ENCODE measurements at regions of chr10 and their contacts with region 1.

Region 1: DNA sequence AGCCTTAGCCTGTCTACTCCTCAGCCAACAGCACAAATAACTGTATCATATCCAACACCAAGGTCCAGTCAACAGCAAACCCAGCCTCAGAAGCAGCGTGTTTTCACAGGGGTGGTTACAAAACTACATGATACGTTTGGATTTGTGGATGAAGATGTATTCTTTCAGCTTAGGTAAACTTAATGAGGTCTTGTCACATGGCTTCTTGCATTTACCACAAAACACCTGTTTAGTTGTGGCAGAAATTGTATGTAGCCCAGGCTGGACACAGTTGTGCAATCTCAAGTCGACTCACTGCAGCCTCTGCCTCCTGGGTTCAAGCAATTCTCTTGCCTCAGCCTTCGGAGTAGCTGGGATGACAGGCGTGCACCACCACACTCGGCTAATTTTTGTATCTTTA is 21.4 kb downstream of the CCAR1 start:
- DNase-seq: no peak
- H3K4me3 ChIP-seq: no peak overlapping the region
- H3K27ac ChIP-seq: no peak overlapping the region
- H3K4me1 ChIP-seq: no peaks in the 10 kb centered on the region
- H3K27me3 ChIP-seq: no peaks in the 10 kb centered on the region
- CTCF ChIP-seq: no peak

Region 2: GRCh38 chr10:68550747-68551411 is 191.5 kb before region 1 on chr10:
- CTCF ChIA-PET with region 1: no interaction called
- POLR2A ChIA-PET with region 1: no interaction called
- intact Hi-C with region 1: no loop called
- DNase-seq: peak in 1 of 2 experiments; percentile 49
- H3K4me3 ChIP-seq: no peak overlapping the region
- H3K27ac ChIP-seq: no peak overlapping the region
- H3K4me1 ChIP-seq: peaks cover 18% of the 10 kb centered on the region
- H3K27me3 ChIP-seq: no peaks in the 10 kb centered on the region
- CTCF ChIP-seq: peak; percentile 79

Region 3: GRCh38 chr10:68784476-68784875 is 42.1 kb after region 1 on chr10:
- CTCF ChIA-PET with region 1: no interaction called
- POLR2A ChIA-PET with region 1: no interaction called
- intact Hi-C with region 1: loop called (anchors 5 kb)
- DNase-seq: no peak
- H3K4me3 ChIP-seq: no peak overlapping the region
- H3K27ac ChIP-seq: no peak overlapping the region
- H3K4me1 ChIP-seq: no peaks in the 10 kb centered on the region
- H3K27me3 ChIP-seq: no peaks in the 10 kb centered on the region
- CTCF ChIP-seq: no peak